ENCODE measurements at regions of chr19 and their contacts with region 1.

Region 1: GRCh38 chr19:14517840-14518505 is at the start of gene DNAJB1:
- DNase-seq: peak in 1 of 2 experiments; percentile 80
- H3K4me3 ChIP-seq: peak within 1 kb of the TSS; percentile 99
- H3K27ac ChIP-seq: peak within 1 kb of the TSS; percentile 94
- H3K4me1 ChIP-seq: peaks cover 46% of the 10 kb centered on the region
- H3K27me3 ChIP-seq: no peaks in the 10 kb centered on the region
- CTCF ChIP-seq: no peak
- total RNA-seq, gene DNAJB1: 159 and 199 TPM in 2 replicates

Region 2: DNA sequence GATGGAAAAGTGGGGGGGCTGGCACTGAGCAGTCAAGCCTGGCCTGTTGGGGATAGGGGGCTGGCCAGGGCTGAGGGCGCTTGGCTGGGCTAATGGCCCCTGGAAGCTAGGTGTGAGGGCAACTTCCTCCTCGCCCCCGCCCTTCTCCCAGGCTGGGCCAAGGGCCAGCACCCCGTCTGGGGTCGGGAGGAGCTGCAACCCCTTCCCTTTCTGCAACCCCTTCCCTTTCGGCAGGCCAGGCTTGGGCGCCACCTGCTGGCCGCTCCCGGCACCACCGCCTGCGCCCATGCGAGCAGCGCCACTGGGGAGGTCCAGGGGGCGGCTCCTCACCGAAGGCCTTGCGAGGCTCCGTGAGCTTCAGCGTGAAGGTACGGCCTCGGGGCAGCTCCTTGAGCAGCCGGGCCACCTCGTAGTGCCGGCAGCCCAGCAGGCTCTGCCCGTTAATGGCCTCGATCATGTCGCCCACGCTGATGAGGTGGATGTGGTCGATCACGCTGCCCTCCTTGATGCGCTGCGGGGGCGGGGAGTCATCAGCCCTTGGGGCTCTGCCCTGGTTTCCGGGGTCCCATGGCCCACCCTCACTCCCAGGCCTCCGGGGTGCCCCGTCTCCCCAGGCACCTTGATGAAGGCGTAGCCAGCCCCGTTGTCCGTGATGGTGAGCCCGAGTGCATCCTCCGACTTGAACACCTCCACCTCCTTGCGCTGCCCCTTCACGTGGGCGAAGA is 37.8 kb before region 1 on chr19:
- CTCF ChIA-PET with region 1: no interaction called
- POLR2A ChIA-PET with region 1: no interaction called
- intact Hi-C with region 1: loop called (anchors 5 kb)
- DNase-seq: peak in 1 of 2 experiments; percentile 47
- H3K4me3 ChIP-seq: no peak overlapping the region
- H3K27ac ChIP-seq: no peak overlapping the region
- H3K4me1 ChIP-seq: peaks cover 30% of the 10 kb centered on the region
- H3K27me3 ChIP-seq: no peaks in the 10 kb centered on the region
- CTCF ChIP-seq: peak; percentile 94

Region 3: GRCh38 chr19:14505488-14506432 is 12.2 kb before region 1 on chr19:
- CTCF ChIA-PET with region 1: interaction called, 13 read pairs
- POLR2A ChIA-PET with region 1: interaction called, 14 read pairs
- intact Hi-C with region 1: no loop called
- DNase-seq: peak; percentile 97 to 100
- H3K4me3 ChIP-seq: peak overlapping the region; percentile 45; the same call in 1 of the 2 replicates
- H3K27ac ChIP-seq: peak overlapping the region; percentile 99
- H3K4me1 ChIP-seq: peaks cover 84% of the 10 kb centered on the region
- H3K27me3 ChIP-seq: no peaks in the 10 kb centered on the region
- CTCF ChIP-seq: peak; percentile 99

Region 4: GRCh38 chr19:14550201-14550784 is 32.3 kb after region 1 on chr19:
- CTCF ChIA-PET with region 1: no interaction called
- POLR2A ChIA-PET with region 1: interaction called, 25 read pairs
- intact Hi-C with region 1: no loop called
- DNase-seq: peak; percentile 34 to 83
- H3K4me3 ChIP-seq: no peak overlapping the region
- H3K27ac ChIP-seq: no peak overlapping the region
- H3K4me1 ChIP-seq: peaks cover 16% of the 10 kb centered on the region
- H3K27me3 ChIP-seq: no peaks in the 10 kb centered on the region
- CTCF ChIP-seq: no peak

Region 5: GRCh38 chr19:14571695-14572490 is 53.9 kb after region 1 on chr19 and contains the start of gene NDUFB7:
- CTCF ChIA-PET with region 1: no interaction called
- POLR2A ChIA-PET with region 1: no interaction called
- intact Hi-C with region 1: no loop called
- DNase-seq: peak; percentile 88 to 93
- H3K4me3 ChIP-seq: peak within 1 kb of the TSS; percentile 66
- H3K27ac ChIP-seq: 0 out of 2 replicates have a peak within 1 kb of the TSS, but pooled peaks have one; percentile 10
- H3K4me1 ChIP-seq: peaks cover 14% of the 10 kb centered on the region
- H3K27me3 ChIP-seq: no peaks in the 10 kb centered on the region
- CTCF ChIP-seq: peak; percentile 69
- total RNA-seq, gene NDUFB7: 192 and 248 TPM in 2 replicates

Measured in PC-9 (cell line).